H1 (cell line): ENCODE measurements at regions of chr2 and their contacts with region 1.

Region 1: DNA sequence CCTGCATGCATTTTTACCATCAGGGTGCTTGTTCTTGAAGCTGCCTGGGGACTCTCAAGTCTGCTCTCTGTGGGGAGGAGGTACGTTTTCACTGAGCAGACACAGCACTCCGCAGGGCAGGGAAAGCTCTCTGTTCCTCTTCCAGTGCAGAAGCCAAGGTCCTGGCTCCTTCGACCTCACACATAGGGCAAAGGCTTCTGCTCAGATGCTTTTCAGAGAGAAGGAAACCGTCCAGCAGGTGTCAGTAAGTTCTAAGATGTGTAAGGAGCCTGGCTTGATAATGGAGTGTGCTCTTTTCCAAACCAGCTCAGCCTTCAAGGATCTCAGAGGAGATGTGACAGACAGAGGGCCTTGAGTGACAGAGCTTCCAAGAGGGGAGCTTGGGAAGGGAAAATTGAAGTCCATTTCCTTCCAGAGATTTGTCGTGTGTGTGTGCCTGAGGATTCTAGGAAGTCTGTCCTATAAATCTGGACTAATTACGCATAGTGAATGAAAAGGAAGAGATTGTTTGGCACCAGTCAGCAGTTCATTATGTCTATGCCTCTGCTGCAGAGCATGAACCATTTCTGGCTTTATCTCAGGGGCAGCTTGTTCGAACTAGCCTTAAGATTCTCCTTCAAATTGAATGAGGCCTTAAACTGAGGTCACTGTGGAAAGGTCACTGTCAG is 67.3 kb upstream of the UPP2 start:
- DNase-seq: no peak
- H3K4me3 ChIP-seq: no peak overlapping the region
- H3K27ac ChIP-seq: no peak overlapping the region
- H3K4me1 ChIP-seq: no peaks in the 10 kb centered on the region
- H3K27me3 ChIP-seq: no peaks in the 10 kb centered on the region
- CTCF ChIP-seq: peak in 2 of 3 experiments; percentile 80 to 81; a peak in 3 of 4 replicates
- EP300 ChIP-seq: no peak
- POLR2A ChIP-seq: no peak
- RAD21 ChIP-seq: peak; percentile 90 to 94

Region 2: DNA sequence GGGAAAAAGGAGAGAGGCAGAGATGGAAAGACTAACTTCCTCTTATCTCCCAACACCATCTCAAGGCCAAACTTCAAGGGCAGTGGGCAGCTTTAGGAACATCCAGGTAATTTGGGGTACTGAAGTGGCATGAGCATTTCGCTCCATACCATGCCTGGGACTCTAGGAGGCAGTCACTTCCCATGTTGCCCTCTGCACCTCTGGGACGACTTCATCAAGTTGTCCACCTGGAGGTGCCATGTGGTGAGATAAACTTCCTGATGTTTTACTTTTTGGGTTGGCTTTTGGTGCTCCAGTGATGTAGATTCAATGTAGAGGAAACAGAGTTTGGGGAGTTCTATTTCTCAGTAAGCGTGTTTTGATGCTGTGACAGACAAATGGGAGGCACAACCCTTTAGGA is 11.0 kb after region 1 on chr2:
- CTCF ChIA-PET with region 1: interaction called, 32 read pairs
- POLR2A ChIA-PET with region 1: no interaction called
- DNase-seq: no peak
- H3K4me3 ChIP-seq: no peak overlapping the region
- H3K27ac ChIP-seq: no peak overlapping the region
- H3K4me1 ChIP-seq: no peaks in the 10 kb centered on the region
- H3K27me3 ChIP-seq: no peaks in the 10 kb centered on the region
- CTCF ChIP-seq: peak; percentile 77 to 98 (median 90)
- EP300 ChIP-seq: no peak
- POLR2A ChIP-seq: no peak
- RAD21 ChIP-seq: peak; percentile 86 to 93

Region 3: GRCh38 chr2:158273414-158274190 is 239.3 kb after region 1 on chr2:
- CTCF ChIA-PET with region 1: no interaction called
- POLR2A ChIA-PET with region 1: no interaction called
- DNase-seq: no peak
- H3K4me3 ChIP-seq: no peak overlapping the region
- H3K27ac ChIP-seq: no peak overlapping the region
- H3K4me1 ChIP-seq: no peaks in the 10 kb centered on the region
- H3K27me3 ChIP-seq: no peaks in the 10 kb centered on the region
- CTCF ChIP-seq: no peak
- EP300 ChIP-seq: no peak
- POLR2A ChIP-seq: no peak
- RAD21 ChIP-seq: no peak

Region 4: GRCh38 chr2:158723917-158724690 is 689.8 kb after region 1 on chr2:
- CTCF ChIA-PET with region 1: interaction called, 13 read pairs
- POLR2A ChIA-PET with region 1: no interaction called
- DNase-seq: peak; percentile 10 to 75
- H3K4me3 ChIP-seq: no peak overlapping the region
- H3K27ac ChIP-seq: peak overlapping the region; percentile 29; the same call in 1 of the 2 replicates
- H3K4me1 ChIP-seq: peaks cover 0 to 6% (median 2%) of the 10 kb centered on the region in 4 experiments; a peak in 1 of 7 replicates
- H3K27me3 ChIP-seq: no peaks in the 10 kb centered on the region
- CTCF ChIP-seq: peak; percentile 62 to 96 (median 88)
- EP300 ChIP-seq: no peak
- POLR2A ChIP-seq: no peak
- RAD21 ChIP-seq: peak; percentile 50 to 62; a peak in 3 of 4 replicates